A549 (cell line): ENCODE measurements at regions of chr5 and their contacts with region 1.

Region 1: DNA sequence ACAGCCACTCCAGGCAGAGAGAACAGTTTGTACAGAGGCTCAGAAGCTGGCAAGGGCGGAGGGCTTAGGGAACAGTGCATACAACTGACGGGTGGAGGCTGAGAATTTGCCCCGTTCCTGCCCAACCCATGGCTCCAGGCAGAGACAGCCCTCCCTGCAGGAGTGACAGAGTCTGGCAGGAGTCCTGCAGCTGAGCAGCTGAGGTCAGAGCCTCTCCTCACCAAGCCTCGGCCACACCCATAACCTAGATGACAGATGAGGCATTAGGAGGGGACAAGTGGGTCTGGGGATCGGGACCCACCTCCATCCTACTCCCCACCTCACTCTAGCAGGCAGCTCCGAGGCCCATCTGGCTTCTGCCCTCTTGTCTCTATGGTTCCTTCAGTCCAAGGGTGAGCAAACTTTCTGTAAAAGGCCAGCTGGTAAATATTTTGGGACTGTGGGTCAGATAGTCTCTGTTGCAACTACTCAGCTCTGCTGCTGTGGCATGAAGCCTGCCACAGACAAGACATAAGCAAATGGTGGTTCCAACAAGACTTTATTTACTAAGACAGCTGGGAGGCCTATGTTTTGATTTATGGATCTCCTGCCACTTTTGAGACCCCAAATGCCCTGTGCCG is 83.6 kb downstream of the SH3TC2 start:
- DNase-seq: no peak
- ATAC-seq: peak; percentile 45 to 54; a peak in 4 of 6 replicates
- H3K4me3 ChIP-seq: no peak overlapping the region
- H3K27ac ChIP-seq: peak overlapping the region; percentile 34 to 56; a peak in 2 of 6 replicates
- H3K4me1 ChIP-seq: peaks cover 16% of the 10 kb centered on the region
- CTCF ChIP-seq: no peak
- EP300 ChIP-seq: no peak
- POLR2A ChIP-seq: no peak
- RAD21 ChIP-seq: no peak

Region 2: DNA sequence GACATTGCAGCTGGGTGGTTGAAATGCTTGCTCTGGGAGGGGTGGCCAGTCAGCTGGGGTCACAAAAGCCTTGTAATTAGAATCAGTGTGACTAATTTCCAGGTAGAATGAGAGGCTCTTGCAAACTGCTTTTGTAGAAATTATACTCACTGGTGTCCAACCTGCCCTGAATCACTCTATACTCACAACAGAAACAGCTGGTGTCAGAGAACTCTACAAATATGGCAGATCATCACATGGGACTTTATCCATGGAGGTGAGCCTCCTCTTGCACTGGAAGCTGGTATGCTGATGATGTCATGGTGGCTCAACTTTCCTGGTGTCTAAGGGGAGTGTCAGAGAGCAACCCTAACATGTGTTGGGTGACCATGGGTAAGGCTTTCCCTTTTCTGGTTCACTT is 12.4 kb after region 1 on chr5:
- CTCF ChIA-PET with region 1: interaction called, 10 read pairs
- POLR2A ChIA-PET with region 1: no interaction called
- DNase-seq: no peak
- ATAC-seq: no peak
- H3K4me3 ChIP-seq: no peak overlapping the region
- H3K27ac ChIP-seq: no peak overlapping the region
- H3K4me1 ChIP-seq: no peaks in the 10 kb centered on the region
- CTCF ChIP-seq: no peak
- EP300 ChIP-seq: no peak
- POLR2A ChIP-seq: no peak
- RAD21 ChIP-seq: no peak